Esophagus muscularis mucosa (tissue), 4 donors: ENCODE measurements at regions of chrX and their contacts with region 1.

Region 1: DNA sequence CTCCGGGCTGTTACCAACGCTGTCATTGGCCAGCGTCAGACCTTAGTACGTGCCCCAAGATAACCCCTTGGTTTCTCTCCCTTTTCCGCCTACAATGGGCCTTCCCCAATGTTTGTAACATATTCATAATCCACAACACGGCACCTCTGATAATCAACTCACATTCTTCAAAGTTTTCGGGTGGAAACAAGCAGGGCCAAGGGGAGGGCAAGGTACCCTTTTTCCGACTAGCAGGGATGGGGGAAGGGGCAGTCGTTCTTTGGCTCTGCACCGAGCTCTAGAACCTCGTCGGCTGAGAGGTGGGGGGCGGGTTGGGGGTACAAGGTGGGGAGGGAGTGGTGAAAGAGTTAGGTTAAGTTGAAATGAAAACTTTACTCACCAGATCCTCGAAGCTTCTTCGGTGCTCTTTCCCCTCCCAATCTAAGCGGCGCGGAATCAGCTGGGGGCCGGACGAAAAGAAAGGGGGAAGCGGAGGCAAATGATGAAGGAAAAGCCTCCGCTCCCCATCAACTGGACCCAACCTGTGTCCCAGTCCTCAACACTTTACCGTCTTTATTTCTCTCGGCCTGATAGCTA is 1.4 kb downstream of the BRWD3 start:
- DNase-seq: no peak
- H3K4me3 ChIP-seq: peak overlapping the region; percentile 70 to 77 (median 70)
- H3K27ac ChIP-seq: peak overlapping the region; percentile 80 to 90 (median 86)
- H3K4me1 ChIP-seq: peaks cover 0 to 11% (median 7%) of the 10 kb centered on the region in 4 donors
- H3K27me3 ChIP-seq: no peaks in the 10 kb centered on the region
- CTCF ChIP-seq: no peak
- EP300 ChIP-seq: no peak
- POLR2A ChIP-seq: no peak

Region 2: GRCh38 chrX:81121513-81122382 is 313.5 kb after region 1 on chrX:
- intact Hi-C with region 1: loop called (anchors 5 kb)
- DNase-seq: peak; percentile 95
- H3K4me3 ChIP-seq: peak overlapping the region; percentile 54 to 61 (median 58)
- H3K27ac ChIP-seq: peak overlapping the region; percentile 71 to 83 (median 72)
- H3K4me1 ChIP-seq: peaks cover 0 to 10% (median 6%) of the 10 kb centered on the region in 4 donors
- H3K27me3 ChIP-seq: no peaks in the 10 kb centered on the region
- CTCF ChIP-seq: no peak
- EP300 ChIP-seq: no peak
- POLR2A ChIP-seq: no peak